ENCODE measurements at regions of chr7 and their contacts with region 1.

Region 1: GRCh38 chr7:106176414-106177299 is 64.5 kb upstream of the SYPL1 start:
- DNase-seq: peak in 34 of 35 experiments; percentile 12 to 78 (median 54)
- ATAC-seq: peak; percentile 75 to 80 (median 79)
- H3K4me3 ChIP-seq: no peak overlapping the region
- H3K4me3 Mint-ChIP-seq: no peak overlapping the region
- H3K27ac ChIP-seq: no peak overlapping the region
- H3K27ac Mint-ChIP-seq: no peak overlapping the region
- H3K4me1 ChIP-seq: no peaks in the 10 kb centered on the region
- H3K4me1 Mint-ChIP-seq: peaks cover 0 to 4% (median 2%) of the 10 kb centered on the region in 3 donors
- H3K27me3 ChIP-seq: peaks cover 4 to 9% of the 10 kb centered on the region in 2 experiments
- H3K27me3 Mint-ChIP-seq: peaks cover 13% of the 10 kb centered on the region in 2 donors

Region 2: DNA sequence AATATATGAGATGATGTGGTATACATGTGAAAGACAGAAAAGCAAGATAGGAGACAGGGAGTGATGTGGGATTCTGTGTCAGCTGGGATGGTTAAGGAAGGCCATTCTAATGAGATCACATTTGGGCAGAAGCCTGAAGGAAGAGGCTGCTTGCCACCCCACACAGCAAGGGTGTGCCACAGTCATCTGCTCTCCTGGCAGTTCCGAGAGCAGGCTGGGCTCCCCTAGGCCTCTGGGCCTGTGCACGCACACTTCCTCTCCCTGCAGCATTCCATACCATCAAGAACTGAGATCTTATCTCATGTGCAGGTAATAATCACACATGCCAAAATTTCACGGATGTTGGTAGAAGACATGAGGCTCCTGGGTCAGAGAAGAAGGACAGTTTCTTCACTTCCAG is 107.7 kb before region 1 on chr7:
- CTCF ChIA-PET with region 1: no interaction called
- POLR2A ChIA-PET with region 1: no interaction called
- DNase-seq: no peak
- ATAC-seq: no peak
- H3K4me3 ChIP-seq: no peak overlapping the region
- H3K4me3 Mint-ChIP-seq: no peak overlapping the region
- H3K27ac ChIP-seq: no peak overlapping the region
- H3K27ac Mint-ChIP-seq: no peak overlapping the region
- H3K4me1 ChIP-seq: peaks cover 20 to 46% of the 10 kb centered on the region in 2 experiments
- H3K4me1 Mint-ChIP-seq: peaks cover 51 to 53% (median 53%) of the 10 kb centered on the region in 3 donors
- H3K27me3 ChIP-seq: no peaks in the 10 kb centered on the region
- H3K27me3 Mint-ChIP-seq: no peaks in the 10 kb centered on the region

Region 3: GRCh38 chr7:106461993-106462859 is 285.6 kb after region 1 on chr7:
- CTCF ChIA-PET with region 1: interaction called, 42 to 59 read pairs
- POLR2A ChIA-PET with region 1: no interaction called
- DNase-seq: peak in 2 of 35 experiments; percentile 16 to 50
- ATAC-seq: no peak
- H3K4me3 ChIP-seq: no peak overlapping the region
- H3K4me3 Mint-ChIP-seq: no peak overlapping the region
- H3K27ac ChIP-seq: no peak overlapping the region
- H3K27ac Mint-ChIP-seq: no peak overlapping the region
- H3K4me1 ChIP-seq: no peaks in the 10 kb centered on the region
- H3K4me1 Mint-ChIP-seq: peaks cover 0 to 2% (median 2%) of the 10 kb centered on the region in 3 donors
- H3K27me3 ChIP-seq: no peaks in the 10 kb centered on the region
- H3K27me3 Mint-ChIP-seq: no peaks in the 10 kb centered on the region

Region 4: GRCh38 chr7:106865130-106866041 is 688.7 kb after region 1 on chr7 and contains the start of gene PIK3CG:
- CTCF ChIA-PET with region 1: no interaction called
- POLR2A ChIA-PET with region 1: no interaction called
- DNase-seq: peak in 20 of 35 experiments; percentile 5 to 77 (median 20)
- ATAC-seq: peak; percentile 92 to 97 (median 96)
- H3K4me3 ChIP-seq: peak within 1 kb of the TSS; percentile 59 to 88
- H3K4me3 Mint-ChIP-seq: peak within 1 kb of the TSS; percentile 90 to 91 (median 90)
- H3K27ac ChIP-seq: peak within 1 kb of the TSS; percentile 85
- H3K27ac Mint-ChIP-seq: peak within 1 kb of the TSS; percentile 91 to 92
- H3K4me1 ChIP-seq: peaks cover 24 to 41% of the 10 kb centered on the region in 2 experiments
- H3K4me1 Mint-ChIP-seq: peaks cover 79 to 83% (median 81%) of the 10 kb centered on the region in 3 donors
- H3K27me3 ChIP-seq: no peaks in the 10 kb centered on the region
- H3K27me3 Mint-ChIP-seq: no peaks in the 10 kb centered on the region
- total RNA-seq, gene PIK3CG: 27.8 to 33.7 (median 28.4) TPM